ENCODE measurements at regions of chr10 and their contacts with region 1.

Region 1: DNA sequence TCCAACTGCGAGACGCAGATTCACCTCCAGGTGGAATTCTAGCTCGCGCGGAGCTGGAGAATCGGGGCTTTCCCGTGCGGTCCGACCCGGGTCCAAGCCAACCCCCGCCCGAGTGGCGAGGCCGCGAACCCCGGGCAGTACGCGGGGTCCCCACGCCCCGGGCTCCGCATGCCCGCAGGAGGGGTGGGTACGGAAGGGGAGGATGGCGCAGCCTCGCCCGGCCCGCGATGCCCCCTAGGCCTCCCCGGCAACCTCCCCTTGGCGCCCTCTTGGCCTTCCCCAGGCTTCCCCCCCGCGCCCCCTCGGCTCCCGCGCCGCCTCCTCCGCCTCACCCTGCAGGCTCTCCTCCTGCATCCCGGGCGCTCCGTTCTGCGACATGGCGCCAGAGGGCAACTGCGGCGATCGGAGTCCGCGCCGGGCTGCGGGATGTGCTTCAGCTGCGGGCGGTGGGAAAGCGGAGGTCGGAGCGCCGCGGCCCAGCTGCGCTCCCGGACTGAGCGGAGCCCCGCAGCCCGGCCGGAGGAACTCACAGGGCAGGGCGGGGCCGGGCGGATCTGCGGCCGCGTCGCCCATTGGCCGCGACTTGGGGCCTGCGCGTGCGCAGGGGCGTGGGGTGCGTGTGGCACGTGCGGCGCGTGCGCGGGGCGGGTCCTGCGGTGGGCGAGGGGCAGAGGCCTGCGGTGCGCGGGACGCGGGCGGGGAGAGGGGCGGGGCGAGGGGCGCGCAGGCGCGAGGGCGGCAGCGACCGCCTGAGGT is at the start of gene BNIP3:
- DNase-seq: peak; percentile 83
- H3K4me3 ChIP-seq: peak within 1 kb of the TSS; percentile 81
- H3K27ac ChIP-seq: peak within 1 kb of the TSS; percentile 52
- H3K27me3 ChIP-seq: no peaks in the 10 kb centered on the region
- CTCF ChIP-seq: peak; percentile 17; the same call in 1 of the 2 replicates
- polyA plus RNA-seq, gene BNIP3: 68.6 and 73.5 TPM in 2 replicates

Region 2: GRCh38 chr10:131943021-131943814 is 38.4 kb before region 1 on chr10:
- CTCF ChIA-PET with region 1: interaction called, 4 read pairs
- POLR2A ChIA-PET with region 1: interaction called, 17 read pairs
- DNase-seq: no peak
- H3K4me3 ChIP-seq: no peak overlapping the region
- H3K27ac ChIP-seq: no peak overlapping the region
- H3K27me3 ChIP-seq: no peaks in the 10 kb centered on the region
- CTCF ChIP-seq: peak; percentile 28; the same call in 1 of the 2 replicates

Region 3: GRCh38 chr10:131997366-131998049 is 15.9 kb after region 1 on chr10:
- CTCF ChIA-PET with region 1: interaction called, 3 read pairs
- POLR2A ChIA-PET with region 1: interaction called, 14 read pairs
- DNase-seq: peak; percentile 74
- H3K4me3 ChIP-seq: 0 out of 2 replicates have a peak overlapping the region, but pooled peaks have one; percentile 4
- H3K27ac ChIP-seq: peak overlapping the region; percentile 57
- H3K27me3 ChIP-seq: peaks cover 7% of the 10 kb centered on the region
- CTCF ChIP-seq: no peak

Region 4: GRCh38 chr10:132536971-132537712 is 555.5 kb after region 1 on chr10:
- CTCF ChIA-PET with region 1: no interaction called
- POLR2A ChIA-PET with region 1: no interaction called
- DNase-seq: peak; percentile 96
- H3K4me3 ChIP-seq: peak overlapping the region; percentile 67
- H3K27ac ChIP-seq: no peak overlapping the region
- H3K27me3 ChIP-seq: no peaks in the 10 kb centered on the region
- CTCF ChIP-seq: peak; percentile 26; the same call in 1 of the 2 replicates

Measured in AG04450 (cell line).